Activated CD4-positive, alpha-beta T cell treated with anti-CD3 and anti-CD28 coated beads for 36 hours (primary cell): ENCODE measurements at regions of chr6 and their contacts with region 1.

Region 1: GRCh38 chr6:42338663-42339218 is 113.0 kb downstream of the TRERF1 start:
- DNase-seq: peak; percentile 42
- ATAC-seq: peak; percentile 28
- H3K4me3 Mint-ChIP-seq: peak overlapping the region; percentile 8
- H3K27ac Mint-ChIP-seq: peak overlapping the region; percentile 84
- H3K4me1 Mint-ChIP-seq: peaks cover 67% of the 10 kb centered on the region
- H3K27me3 Mint-ChIP-seq: no peaks in the 10 kb centered on the region

Region 2: DNA sequence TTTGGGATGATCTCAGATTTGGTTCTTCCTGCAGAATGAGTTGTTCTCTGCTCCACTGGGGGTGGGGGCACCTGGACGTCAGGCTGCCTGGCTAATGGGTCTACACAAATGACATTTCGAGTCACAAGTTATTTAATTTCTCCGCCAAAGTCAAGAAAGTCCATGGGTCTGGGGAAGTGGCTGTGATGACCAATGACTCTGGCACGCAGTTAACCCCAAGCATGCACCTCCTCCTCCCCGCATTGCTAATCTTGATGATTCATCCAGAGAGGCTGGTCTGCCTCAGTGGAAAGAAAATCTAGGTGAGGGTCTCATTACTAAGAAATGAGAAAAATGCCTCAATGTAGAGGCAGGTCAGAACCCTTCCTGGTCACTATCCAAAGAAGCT is 22.8 kb before region 1 on chr6:
- CTCF ChIA-PET with region 1: no interaction called
- POLR2A ChIA-PET with region 1: no interaction called
- intact Hi-C with region 1: loop called (anchors 1 to 2 kb)
- DNase-seq: peak; percentile 54
- ATAC-seq: peak; percentile 61
- H3K4me3 Mint-ChIP-seq: no peak overlapping the region
- H3K27ac Mint-ChIP-seq: peak overlapping the region; percentile 69
- H3K4me1 Mint-ChIP-seq: peaks cover 61% of the 10 kb centered on the region
- H3K27me3 Mint-ChIP-seq: no peaks in the 10 kb centered on the region

Region 3: GRCh38 chr6:42367353-42368011 is 28.7 kb after region 1 on chr6:
- CTCF ChIA-PET with region 1: interaction called, 5 read pairs
- POLR2A ChIA-PET with region 1: no interaction called
- intact Hi-C with region 1: loop called (anchors 1 to 2 kb)
- DNase-seq: peak; percentile 41
- ATAC-seq: peak; percentile 45
- H3K4me3 Mint-ChIP-seq: peak overlapping the region; percentile 64
- H3K27ac Mint-ChIP-seq: peak overlapping the region; percentile 77
- H3K4me1 Mint-ChIP-seq: peaks cover 69% of the 10 kb centered on the region
- H3K27me3 Mint-ChIP-seq: no peaks in the 10 kb centered on the region

Region 4: DNA sequence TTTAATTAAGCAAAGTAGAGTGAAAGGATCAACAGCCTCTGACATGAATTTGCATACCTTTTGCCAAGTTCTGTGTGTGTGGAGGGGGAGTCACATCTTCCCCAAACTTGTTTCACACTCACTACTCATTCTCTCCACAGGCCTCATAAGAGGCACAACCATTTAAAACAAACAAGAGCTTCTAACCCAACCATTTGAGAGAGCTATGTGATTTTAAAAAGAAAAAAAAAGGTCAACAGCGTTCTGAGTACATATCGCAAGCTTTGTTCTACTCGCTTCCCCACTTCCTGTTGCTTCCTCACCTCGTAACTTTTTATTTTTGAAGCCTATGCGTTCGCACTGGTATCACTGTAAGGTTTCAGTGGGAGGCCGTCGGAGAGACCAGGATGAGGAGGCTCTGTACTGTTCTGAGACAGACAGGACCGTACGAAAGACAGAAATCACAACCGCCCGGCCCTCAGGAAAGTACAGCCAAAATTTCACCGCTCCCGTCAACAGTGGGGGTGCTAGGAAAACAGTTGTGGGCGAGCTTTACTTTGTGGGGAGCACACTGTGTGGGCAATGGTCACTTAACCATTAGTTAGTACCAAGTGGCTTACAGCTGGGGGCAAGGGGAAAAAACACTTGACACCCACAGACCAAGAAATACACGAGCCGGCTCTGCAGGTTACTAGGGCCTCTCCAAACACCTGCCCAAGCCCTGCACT is 51.6 kb after region 1 on chr6:
- CTCF ChIA-PET with region 1: interaction called, 21 read pairs
- POLR2A ChIA-PET with region 1: interaction called, 15 read pairs
- intact Hi-C with region 1: loop called (anchors 1 kb)
- DNase-seq: peak; percentile 85
- ATAC-seq: peak; percentile 89
- H3K4me3 Mint-ChIP-seq: peak overlapping the region; percentile 63
- H3K27ac Mint-ChIP-seq: peak overlapping the region; percentile 97
- H3K4me1 Mint-ChIP-seq: peaks cover 98% of the 10 kb centered on the region
- H3K27me3 Mint-ChIP-seq: no peaks in the 10 kb centered on the region

Region 5: DNA sequence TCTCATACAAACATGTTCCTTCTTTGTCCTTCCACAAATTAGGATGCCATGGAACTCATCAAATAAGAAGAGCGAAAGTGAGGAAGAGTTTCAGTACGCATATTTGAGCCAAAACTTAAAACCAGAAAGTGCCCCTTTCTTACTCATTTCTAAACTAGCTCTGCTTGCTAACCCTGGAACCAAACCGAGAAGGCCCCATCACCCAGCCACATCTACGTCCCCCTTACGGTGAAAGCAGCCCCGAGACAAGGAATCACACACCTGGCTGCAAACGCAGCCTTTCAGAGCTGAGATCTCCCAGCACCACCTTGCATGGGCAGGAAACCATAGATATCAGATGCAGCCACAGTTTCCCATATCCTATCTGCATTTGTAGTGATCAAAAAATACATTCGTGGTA is 84.5 kb after region 1 on chr6:
- CTCF ChIA-PET with region 1: interaction called, 3 read pairs
- POLR2A ChIA-PET with region 1: interaction called, 3 read pairs
- intact Hi-C with region 1: loop called in 1 of 2 experiments (anchors 1 kb)
- DNase-seq: peak; percentile 69
- ATAC-seq: peak; percentile 75
- H3K4me3 Mint-ChIP-seq: peak overlapping the region; percentile 1
- H3K27ac Mint-ChIP-seq: peak overlapping the region; percentile 20
- H3K4me1 Mint-ChIP-seq: peaks cover 63% of the 10 kb centered on the region
- H3K27me3 Mint-ChIP-seq: no peaks in the 10 kb centered on the region

Region 6: GRCh38 chr6:42520786-42521607 is 182.3 kb after region 1 on chr6:
- CTCF ChIA-PET with region 1: interaction called, 3 read pairs
- POLR2A ChIA-PET with region 1: interaction called, 7 read pairs
- intact Hi-C with region 1: loop called (anchors 1 to 5 kb)
- DNase-seq: peak; percentile 49
- ATAC-seq: peak; percentile 97
- H3K4me3 Mint-ChIP-seq: no peak overlapping the region
- H3K27ac Mint-ChIP-seq: peak overlapping the region; percentile 76
- H3K4me1 Mint-ChIP-seq: peaks cover 24% of the 10 kb centered on the region
- H3K27me3 Mint-ChIP-seq: no peaks in the 10 kb centered on the region

Region 7: GRCh38 chr6:42642794-42643193 is 304.1 kb after region 1 on chr6:
- CTCF ChIA-PET with region 1: no interaction called
- POLR2A ChIA-PET with region 1: no interaction called
- intact Hi-C with region 1: no loop called
- DNase-seq: no peak
- ATAC-seq: no peak
- H3K4me3 Mint-ChIP-seq: no peak overlapping the region
- H3K27ac Mint-ChIP-seq: no peak overlapping the region
- H3K4me1 Mint-ChIP-seq: peaks cover 3% of the 10 kb centered on the region
- H3K27me3 Mint-ChIP-seq: no peaks in the 10 kb centered on the region